Naive thymus-derived CD4-positive, alpha-beta T cell (primary cell): ENCODE measurements at regions of chr21 and their contacts with region 1.

Region 1: GRCh38 chr21:34986561-34987500 is 62.3 kb downstream of the RUNX1 start:
- DNase-seq: peak in 8 of 9 donors; percentile 52 to 74 (median 67)
- ATAC-seq: peak; percentile 83
- H3K4me3 ChIP-seq: peak overlapping the region; percentile 26
- H3K4me3 Mint-ChIP-seq: peak overlapping the region; percentile 70 to 91 (median 81)
- H3K27ac ChIP-seq: peak overlapping the region; percentile 61
- H3K27ac Mint-ChIP-seq: peak overlapping the region; percentile 82 to 98 (median 94)
- H3K4me1 ChIP-seq: peaks cover 82 to 86% of the 10 kb centered on the region in 2 donors
- H3K4me1 Mint-ChIP-seq: peaks cover 6 to 97% (median 87%) of the 10 kb centered on the region in 7 donors
- H3K27me3 ChIP-seq: no peaks in the 10 kb centered on the region
- H3K27me3 Mint-ChIP-seq: peaks cover 0 to 5% (median 0%) of the 10 kb centered on the region in 5 donors

Region 2: GRCh38 chr21:34933609-34934335 is 53.1 kb before region 1 on chr21:
- CTCF ChIA-PET with region 1: interaction called, 4 read pairs
- POLR2A ChIA-PET with region 1: interaction called, 5 read pairs
- intact Hi-C with region 1: loop called (anchors 1 to 2 kb)
- DNase-seq: peak in 7 of 9 donors; percentile 47 to 83 (median 72)
- ATAC-seq: peak; percentile 94
- H3K4me3 ChIP-seq: peak overlapping the region; percentile 56
- H3K4me3 Mint-ChIP-seq: peak overlapping the region; percentile 39 to 88 (median 78)
- H3K27ac ChIP-seq: peak overlapping the region; percentile 81
- H3K27ac Mint-ChIP-seq: peak overlapping the region; percentile 83 to 97 (median 94)
- H3K4me1 ChIP-seq: peaks cover 52 to 68% of the 10 kb centered on the region in 2 donors
- H3K4me1 Mint-ChIP-seq: peaks cover 70 to 93% (median 89%) of the 10 kb centered on the region in 7 donors
- H3K27me3 ChIP-seq: no peaks in the 10 kb centered on the region
- H3K27me3 Mint-ChIP-seq: no peaks in the 10 kb centered on the region

Region 3: DNA sequence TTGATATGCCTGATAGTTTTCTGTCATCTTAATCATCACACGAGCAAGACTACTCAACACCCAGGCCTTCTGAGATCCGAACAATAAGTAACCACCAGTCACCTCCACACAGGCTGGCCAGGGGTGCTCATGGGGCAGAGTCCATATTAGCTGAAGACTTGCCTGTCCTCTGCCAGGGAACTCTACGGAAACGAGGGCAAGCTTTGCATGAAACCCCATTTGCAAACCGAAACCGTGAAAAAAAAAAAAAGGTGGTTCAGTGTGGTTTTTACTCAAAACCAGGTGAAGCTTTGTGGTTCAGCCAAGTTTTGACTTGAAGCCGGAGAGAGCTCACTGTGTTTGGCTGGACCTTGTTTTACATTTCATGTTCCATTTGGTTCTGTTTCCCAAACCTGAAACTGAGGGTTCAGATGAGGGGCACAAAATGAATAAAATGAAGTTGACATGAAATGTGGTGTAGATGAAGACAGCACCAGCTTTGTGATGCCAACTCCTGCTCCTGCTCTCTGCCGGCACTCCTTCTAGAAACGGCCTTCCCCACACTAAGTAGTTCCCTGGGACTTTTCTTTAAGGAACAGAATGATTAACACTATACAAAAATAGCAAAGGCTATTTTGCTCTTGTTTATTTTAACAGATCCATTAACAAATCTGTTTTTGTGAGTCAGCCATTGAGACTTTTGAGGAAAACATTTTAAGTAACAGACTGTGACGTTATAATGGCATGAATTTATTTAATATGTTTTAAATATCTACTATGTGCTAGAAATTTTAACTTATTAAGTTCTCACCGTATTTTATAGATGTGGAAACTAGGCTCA is 12.5 kb before region 1 on chr21:
- CTCF ChIA-PET with region 1: interaction called, 5 read pairs
- POLR2A ChIA-PET with region 1: interaction called, 23 read pairs
- intact Hi-C with region 1: loop called (anchors 1 kb)
- DNase-seq: peak in 8 of 9 donors; percentile 47 to 81 (median 74)
- ATAC-seq: peak; percentile 91
- H3K4me3 ChIP-seq: peak overlapping the region; percentile 36
- H3K4me3 Mint-ChIP-seq: peak overlapping the region; percentile 78 to 92 (median 86)
- H3K27ac ChIP-seq: peak overlapping the region; percentile 70
- H3K27ac Mint-ChIP-seq: peak overlapping the region; percentile 69 to 98 (median 93)
- H3K4me1 ChIP-seq: peaks cover 49 to 61% of the 10 kb centered on the region in 2 donors
- H3K4me1 Mint-ChIP-seq: peaks cover 65 to 94% (median 89%) of the 10 kb centered on the region in 7 donors
- H3K27me3 ChIP-seq: no peaks in the 10 kb centered on the region
- H3K27me3 Mint-ChIP-seq: peaks cover 0 to 45% (median 0%) of the 10 kb centered on the region in 5 donors

Region 4: DNA sequence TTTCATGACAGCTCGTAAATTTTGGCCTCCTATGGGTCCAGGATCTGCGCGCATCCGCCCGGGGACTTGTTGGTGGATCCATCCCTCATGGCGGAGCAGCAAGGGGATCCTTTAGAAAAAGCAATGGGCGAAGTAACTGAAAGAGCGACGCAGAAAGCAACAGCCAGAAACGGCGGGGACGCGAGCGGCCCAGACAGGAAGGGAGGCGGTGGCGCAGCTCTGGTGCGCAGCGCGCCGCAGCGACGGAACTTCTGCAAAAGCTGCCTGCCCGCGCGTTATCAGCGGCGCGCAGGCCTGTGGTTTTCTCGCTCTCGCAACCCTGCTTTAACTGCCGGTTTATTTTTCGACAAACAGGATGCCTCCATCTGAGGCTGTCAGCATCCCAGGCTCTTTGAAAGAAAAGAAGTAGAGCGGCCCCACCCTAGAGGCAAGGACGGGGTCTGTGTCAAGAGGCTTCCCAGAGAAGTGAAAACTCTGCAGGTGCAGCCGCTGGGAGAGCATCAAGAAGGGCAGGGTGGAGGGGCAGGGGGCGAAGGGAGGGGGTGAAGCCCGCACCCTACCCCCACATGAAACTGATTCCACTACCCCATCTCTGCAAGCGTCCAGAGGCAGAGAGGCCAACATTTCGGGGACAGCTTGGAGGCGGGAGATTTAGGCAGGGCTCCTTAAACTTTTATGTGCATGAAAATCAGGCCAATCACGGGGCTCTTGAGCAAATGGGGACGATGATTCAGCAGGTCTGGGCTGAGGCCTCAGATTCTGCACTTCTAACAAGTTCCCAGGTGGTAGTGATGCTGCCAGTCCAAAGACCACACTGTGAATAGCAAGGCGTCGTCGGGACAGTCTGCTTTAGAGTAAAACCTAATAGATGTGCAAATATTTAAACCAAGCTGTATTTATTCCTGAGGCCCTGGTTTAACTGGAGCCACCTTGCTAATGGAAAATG is 40.1 kb after region 1 on chr21:
- CTCF ChIA-PET with region 1: no interaction called
- POLR2A ChIA-PET with region 1: interaction called, 6 read pairs
- intact Hi-C with region 1: loop called (anchors 1 kb)
- DNase-seq: peak; percentile 74 to 93 (median 91)
- ATAC-seq: peak; percentile 93
- H3K4me3 ChIP-seq: peak overlapping the region; percentile 45
- H3K4me3 Mint-ChIP-seq: peak overlapping the region; percentile 77 to 98 (median 86)
- H3K27ac ChIP-seq: peak overlapping the region; percentile 75
- H3K27ac Mint-ChIP-seq: peak overlapping the region; percentile 96 to 100 (median 99)
- H3K4me1 ChIP-seq: peaks cover 69 to 85% of the 10 kb centered on the region in 2 donors
- H3K4me1 Mint-ChIP-seq: peaks cover 76 to 98% (median 93%) of the 10 kb centered on the region in 7 donors
- H3K27me3 ChIP-seq: no peaks in the 10 kb centered on the region
- H3K27me3 Mint-ChIP-seq: no peaks in the 10 kb centered on the region

Region 5: GRCh38 chr21:35226948-35227744 is 240.3 kb after region 1 on chr21:
- CTCF ChIA-PET with region 1: no interaction called
- POLR2A ChIA-PET with region 1: no interaction called
- intact Hi-C with region 1: loop called in 1 of 2 experiments (anchors 10 kb)
- DNase-seq: peak in 7 of 9 donors; percentile 46 to 74 (median 63)
- ATAC-seq: peak; percentile 87
- H3K4me3 ChIP-seq: peak overlapping the region; percentile 43
- H3K4me3 Mint-ChIP-seq: peak overlapping the region; percentile 51 to 80 (median 70)
- H3K27ac ChIP-seq: peak overlapping the region; percentile 20
- H3K27ac Mint-ChIP-seq: peak overlapping the region; percentile 48 to 90 (median 82)
- H3K4me1 ChIP-seq: peaks cover 26 to 30% of the 10 kb centered on the region in 2 donors
- H3K4me1 Mint-ChIP-seq: peaks cover 27 to 50% (median 43%) of the 10 kb centered on the region in 7 donors
- H3K27me3 ChIP-seq: no peaks in the 10 kb centered on the region
- H3K27me3 Mint-ChIP-seq: peaks cover 0 to 6% (median 0%) of the 10 kb centered on the region in 5 donors